ENCODE measurements at regions of chr12 and their contacts with region 1.

Region 1: GRCh38 chr12:75977952-75978671 is 53.5 kb downstream of the PHLDA1 start:
- DNase-seq: peak; percentile 50
- ATAC-seq: peak; percentile 90
- H3K4me3 Mint-ChIP-seq: peak overlapping the region; percentile 74
- H3K27ac Mint-ChIP-seq: peak overlapping the region; percentile 93
- H3K4me1 Mint-ChIP-seq: peaks cover 43% of the 10 kb centered on the region
- H3K27me3 Mint-ChIP-seq: no peaks in the 10 kb centered on the region

Region 2: DNA sequence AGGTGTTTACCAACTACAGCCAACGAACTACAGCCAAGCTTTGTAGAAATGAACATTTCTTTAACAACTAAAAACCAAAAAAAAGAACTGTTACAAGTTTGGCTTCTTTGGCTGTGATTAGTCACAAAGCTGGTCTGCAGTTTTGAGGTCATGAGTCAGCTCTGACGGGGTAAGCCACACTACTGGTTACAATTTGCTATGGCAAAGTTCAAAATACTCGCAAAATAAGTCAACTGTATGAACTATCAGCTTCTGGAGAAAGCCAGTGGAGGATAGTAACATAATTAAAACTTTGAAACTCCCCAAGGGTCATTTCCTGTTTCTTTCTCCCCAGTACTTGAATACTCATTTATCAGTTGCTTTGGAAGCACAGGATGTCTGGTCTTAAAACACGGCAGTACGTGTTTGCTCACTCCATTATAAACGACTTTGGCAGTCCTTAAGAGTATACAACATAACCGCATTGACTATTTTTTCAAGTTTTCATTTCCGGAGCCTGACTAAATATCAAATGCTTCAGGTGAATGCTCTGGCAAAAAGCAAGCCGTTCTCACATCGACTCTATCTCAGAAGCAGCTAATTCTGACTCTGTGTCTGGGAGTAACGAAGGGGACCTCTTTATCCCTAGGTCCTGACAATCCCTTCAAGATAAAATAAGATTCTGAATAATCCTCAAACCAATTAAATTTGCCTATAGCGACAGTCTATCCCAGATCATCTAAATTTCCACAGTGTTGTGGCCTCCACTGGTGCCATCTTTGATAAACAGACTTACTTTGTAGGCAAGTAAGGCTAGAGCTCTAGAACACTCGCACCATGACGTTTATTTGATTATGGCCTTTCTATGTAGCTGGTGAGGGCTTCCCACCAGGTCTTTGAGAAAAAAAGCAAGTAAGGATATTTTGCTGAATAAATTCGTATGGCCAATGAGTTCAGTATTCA is 42.9 kb after region 1 on chr12:
- POLR2A ChIA-PET with region 1: interaction called, 12 read pairs
- DNase-seq: peak; percentile 39
- ATAC-seq: peak; percentile 77
- H3K4me3 Mint-ChIP-seq: peak overlapping the region; percentile 61
- H3K27ac Mint-ChIP-seq: peak overlapping the region; percentile 93
- H3K4me1 Mint-ChIP-seq: peaks cover 36% of the 10 kb centered on the region
- H3K27me3 Mint-ChIP-seq: no peaks in the 10 kb centered on the region

Region 3: DNA sequence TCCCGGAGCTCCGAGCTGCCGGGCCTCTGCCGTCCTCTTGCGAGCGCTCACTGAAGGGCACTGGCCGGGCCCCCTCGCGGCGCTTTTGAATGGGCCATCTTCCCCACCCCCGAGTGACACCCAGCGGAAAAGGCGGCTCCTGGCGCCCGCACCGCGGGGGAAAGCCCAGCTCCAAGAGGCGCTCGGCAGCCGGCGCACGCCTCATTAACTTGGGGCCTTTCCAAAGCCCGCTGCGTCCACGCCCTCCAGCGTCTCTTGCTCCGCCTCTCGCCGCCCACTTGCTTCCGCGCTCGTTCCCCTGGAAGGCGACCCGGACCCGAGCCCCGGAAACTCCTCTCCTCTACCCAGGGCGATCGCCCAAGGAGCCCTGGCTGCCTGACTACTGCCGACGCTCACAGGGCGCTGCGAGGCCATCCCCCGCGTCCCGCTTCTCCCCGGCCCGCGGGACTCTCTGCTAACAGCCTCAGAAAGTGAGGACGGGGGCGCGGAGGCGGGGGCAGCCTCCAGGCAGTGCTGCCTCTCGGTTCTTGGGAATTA is 53.5 kb after region 1 on chr12 and contains the start of gene PHLDA1:
- POLR2A ChIA-PET with region 1: interaction called, 13 read pairs
- DNase-seq: peak; percentile 91
- ATAC-seq: peak; percentile 84
- H3K4me3 Mint-ChIP-seq: peak within 1 kb of the TSS; percentile 92
- H3K27ac Mint-ChIP-seq: peak within 1 kb of the TSS; percentile 93
- H3K4me1 Mint-ChIP-seq: peaks cover 29% of the 10 kb centered on the region
- H3K27me3 Mint-ChIP-seq: peaks cover 9% of the 10 kb centered on the region
- total RNA-seq, gene PHLDA1: 5.2 to 5.8 TPM

Measured in activated naive CD8-positive, alpha-beta T cell treated with anti-CD3 and anti-CD28 coated beads, Interleukin-2, amount 10 ng/mL, durations not matched to agents 7 days and 5 days (primary cell).